SK-N-SH (cell line): ENCODE measurements at regions of chr6 and their contacts with region 1.

Region 1: DNA sequence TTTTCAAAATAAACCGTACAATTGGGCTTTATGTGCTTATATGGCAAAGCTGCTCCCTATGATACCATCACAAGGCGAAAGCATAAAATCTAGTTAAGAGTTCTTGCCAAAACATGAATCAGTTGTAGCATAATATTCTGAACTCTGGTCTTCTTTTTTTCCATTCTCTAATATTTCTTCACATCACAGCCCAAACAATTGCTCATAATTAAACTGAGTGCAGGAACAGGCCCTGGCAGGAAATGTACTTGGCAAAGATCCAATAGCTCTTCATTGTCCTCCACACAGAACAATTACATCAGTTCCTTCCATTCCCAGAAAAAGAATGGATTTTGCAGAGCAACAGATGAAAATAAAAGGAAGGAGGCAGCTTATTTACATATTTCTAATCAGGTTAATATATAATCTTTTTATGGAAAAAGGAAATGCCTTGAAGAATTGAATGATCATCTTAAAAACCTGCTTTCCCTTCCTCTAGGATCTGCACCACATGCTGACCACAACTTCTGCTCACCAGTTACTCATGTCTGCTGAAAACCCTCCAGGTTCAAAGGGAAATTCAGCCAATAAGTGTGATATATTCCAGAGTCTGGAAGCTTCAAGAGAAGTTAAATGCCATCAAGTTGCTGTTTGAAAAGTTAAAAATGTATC is 123.3 kb upstream of the COL21A1 start:
- DNase-seq: peak; percentile 51
- H3K4me3 ChIP-seq: peak overlapping the region in 1 of 2 experiments; percentile 36; a peak in 2 of 4 replicates
- H3K27ac ChIP-seq: peak overlapping the region; percentile 94 to 97
- H3K4me1 ChIP-seq: peaks cover 28 to 33% of the 10 kb centered on the region in 2 experiments
- H3K27me3 ChIP-seq: no peaks in the 10 kb centered on the region
- CTCF ChIP-seq: no peak
- EP300 ChIP-seq: peak; percentile 66 to 83; a peak in 3 of 4 replicates
- RAD21 ChIP-seq: no peak; the same call in 1 of the 2 replicates

Region 2: DNA sequence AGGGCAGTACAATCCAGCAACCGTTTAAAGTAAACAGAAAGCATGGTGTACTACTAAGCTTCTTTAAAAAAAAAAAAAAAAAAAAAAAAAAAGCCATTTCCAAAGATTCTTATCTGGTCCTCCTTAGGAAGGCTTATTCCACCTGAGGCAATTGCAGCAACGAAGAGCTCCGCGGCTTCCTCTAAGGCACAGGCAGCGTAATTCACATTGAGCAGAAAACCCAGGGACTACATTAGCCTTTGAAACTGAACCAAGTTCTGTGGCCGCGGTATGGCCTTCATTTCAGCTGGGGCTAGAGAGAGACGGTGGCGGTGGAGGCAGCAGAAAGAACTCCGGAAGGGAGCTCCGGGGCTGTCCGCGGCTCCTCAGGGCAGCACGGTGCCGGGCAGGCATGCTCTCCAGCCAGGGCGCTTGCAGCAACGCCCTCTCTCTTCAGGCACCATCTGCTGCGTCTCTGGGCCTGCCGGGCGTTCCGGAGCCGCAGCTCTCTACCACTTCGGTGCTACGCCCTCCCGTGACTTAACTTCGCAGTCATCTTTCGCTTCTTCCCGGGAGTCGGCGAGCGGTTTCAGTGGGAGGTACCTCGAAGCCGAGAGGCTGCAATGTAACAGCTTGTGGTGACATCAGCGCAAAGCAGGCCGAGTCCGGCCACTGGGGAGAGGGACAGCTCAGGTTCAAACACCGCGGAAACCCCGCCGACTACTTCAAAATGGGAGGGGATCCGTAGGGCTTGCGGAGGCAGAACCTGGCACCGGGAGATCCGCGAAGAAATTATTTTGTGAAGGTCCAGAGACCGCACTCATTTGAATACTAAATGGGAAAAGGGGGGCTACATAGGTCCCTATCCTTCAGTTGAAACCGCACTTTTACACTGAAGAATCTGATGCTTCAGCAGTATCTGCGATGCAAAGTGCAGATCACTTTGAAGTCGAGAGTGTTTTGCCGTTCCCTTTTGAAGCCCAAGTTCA is 172.0 kb after region 1 on chr6:
- CTCF ChIA-PET with region 1: interaction called, 32 read pairs
- POLR2A ChIA-PET with region 1: interaction called, 9 read pairs
- DNase-seq: peak; percentile 74
- H3K4me3 ChIP-seq: peak overlapping the region; percentile 56 to 76
- H3K27ac ChIP-seq: peak overlapping the region; percentile 88 to 96
- H3K4me1 ChIP-seq: peaks cover 19 to 31% of the 10 kb centered on the region in 2 experiments; a peak in 3 of 4 replicates
- H3K27me3 ChIP-seq: no peaks in the 10 kb centered on the region
- CTCF ChIP-seq: no peak
- EP300 ChIP-seq: peak; percentile 4 to 24; a peak in 2 of 4 replicates
- RAD21 ChIP-seq: 0 out of 2 replicates have a peak, but pooled peaks have one; percentile 11

Region 3: GRCh38 chr6:56549014-56549413 is 178.3 kb after region 1 on chr6:
- CTCF ChIA-PET with region 1: interaction called, 32 read pairs
- POLR2A ChIA-PET with region 1: interaction called, 3 read pairs
- DNase-seq: peak; percentile 27
- H3K4me3 ChIP-seq: no peak overlapping the region
- H3K27ac ChIP-seq: peak overlapping the region; percentile 33 to 55; a peak in 3 of 4 replicates
- H3K4me1 ChIP-seq: peaks cover 22 to 26% of the 10 kb centered on the region in 2 experiments; a peak in 3 of 4 replicates
- H3K27me3 ChIP-seq: no peaks in the 10 kb centered on the region
- CTCF ChIP-seq: peak; percentile 67
- EP300 ChIP-seq: peak in 1 of 2 experiments; percentile 30; a peak in 1 of 4 replicates
- RAD21 ChIP-seq: peak; percentile 77

Region 4: DNA sequence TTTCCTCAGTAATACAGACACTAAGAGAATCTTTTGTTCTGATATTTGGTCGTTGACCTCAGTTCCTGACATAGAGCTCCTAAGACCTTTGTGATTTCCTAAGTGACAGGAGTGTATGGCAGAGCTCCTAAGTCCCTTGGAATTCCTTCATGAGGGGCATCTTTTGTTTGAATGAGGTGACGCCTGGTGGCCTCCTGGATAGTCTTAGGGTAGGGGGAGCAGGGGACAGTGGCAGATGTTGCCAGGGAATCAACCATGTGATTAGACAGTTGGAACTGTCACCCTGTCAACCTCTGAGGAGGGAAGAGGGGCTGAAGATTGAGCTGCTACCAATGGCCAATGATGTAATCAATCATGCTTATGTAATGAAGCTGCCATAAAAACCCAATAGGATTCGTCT is 205.1 kb after region 1 on chr6:
- CTCF ChIA-PET with region 1: interaction called, 36 read pairs
- POLR2A ChIA-PET with region 1: no interaction called
- DNase-seq: no peak
- H3K4me3 ChIP-seq: no peak overlapping the region
- H3K27ac ChIP-seq: no peak overlapping the region
- H3K4me1 ChIP-seq: peaks cover 24 to 30% of the 10 kb centered on the region in 2 experiments; a peak in 3 of 4 replicates
- H3K27me3 ChIP-seq: no peaks in the 10 kb centered on the region
- CTCF ChIP-seq: no peak
- EP300 ChIP-seq: no peak
- RAD21 ChIP-seq: no peak